ENCODE measurements at regions of chr1 and their contacts with region 1.

Region 1: GRCh38 chr1:205300886-205301821 is 20.4 kb downstream of the NUAK2 start:
- DNase-seq: no peak
- ATAC-seq: peak; percentile 59
- H3K4me3 Mint-ChIP-seq: peak overlapping the region; percentile 46
- H3K27ac Mint-ChIP-seq: peak overlapping the region; percentile 78
- H3K4me1 Mint-ChIP-seq: peaks cover 69% of the 10 kb centered on the region
- H3K27me3 Mint-ChIP-seq: no peaks in the 10 kb centered on the region
- CTCF ChIP-seq: no peak

Region 2: GRCh38 chr1:205313563-205314308 is 12.6 kb after region 1 on chr1:
- CTCF ChIA-PET with region 1: interaction called, 3 read pairs
- POLR2A ChIA-PET with region 1: interaction called, 1,622 read pairs
- intact Hi-C with region 1: loop called (anchors 1 kb)
- DNase-seq: peak; percentile 55
- ATAC-seq: peak; percentile 82
- H3K4me3 Mint-ChIP-seq: peak overlapping the region; percentile 85
- H3K27ac Mint-ChIP-seq: peak overlapping the region; percentile 98
- H3K4me1 Mint-ChIP-seq: peaks cover 95% of the 10 kb centered on the region
- H3K27me3 Mint-ChIP-seq: no peaks in the 10 kb centered on the region
- CTCF ChIP-seq: no peak

Region 3: GRCh38 chr1:205365945-205366463 is 64.8 kb after region 1 on chr1:
- CTCF ChIA-PET with region 1: no interaction called
- POLR2A ChIA-PET with region 1: no interaction called
- intact Hi-C with region 1: no loop called
- DNase-seq: no peak
- ATAC-seq: no peak
- H3K4me3 Mint-ChIP-seq: no peak overlapping the region
- H3K27ac Mint-ChIP-seq: no peak overlapping the region
- H3K4me1 Mint-ChIP-seq: no peaks in the 10 kb centered on the region
- H3K27me3 Mint-ChIP-seq: peaks cover 4% of the 10 kb centered on the region
- CTCF ChIP-seq: no peak

Region 4: GRCh38 chr1:205543411-205544301 is 242.5 kb after region 1 on chr1:
- CTCF ChIA-PET with region 1: no interaction called
- POLR2A ChIA-PET with region 1: no interaction called
- intact Hi-C with region 1: no loop called
- DNase-seq: no peak
- ATAC-seq: no peak
- H3K4me3 Mint-ChIP-seq: no peak overlapping the region
- H3K27ac Mint-ChIP-seq: no peak overlapping the region
- H3K4me1 Mint-ChIP-seq: peaks cover 8% of the 10 kb centered on the region
- H3K27me3 Mint-ChIP-seq: peaks cover 49% of the 10 kb centered on the region
- CTCF ChIP-seq: no peak

Measured in activated B cell treated with CpG ODN at 0.5 μM for 24 hours (primary cell).